CD4-positive, alpha-beta memory T cell (primary cell): ENCODE measurements at regions of chr1 and their contacts with region 1.

Region 1: GRCh38 chr1:77978969-77979876 is at the start of gene FUBP1:
- DNase-seq: peak; percentile 95 to 98 (median 97)
- H3K4me3 ChIP-seq: peak within 1 kb of the TSS; percentile 74 to 94
- H3K4me3 Mint-ChIP-seq: no peak within 1 kb of the TSS
- H3K27ac ChIP-seq: peak within 1 kb of the TSS; percentile 100
- H3K27ac Mint-ChIP-seq: no peak within 1 kb of the TSS
- H3K4me1 ChIP-seq: peaks cover 55% of the 10 kb centered on the region
- H3K4me1 Mint-ChIP-seq: peaks cover 22 to 39% (median 30%) of the 10 kb centered on the region in 4 donors
- H3K27me3 ChIP-seq: no peaks in the 10 kb centered on the region
- H3K27me3 Mint-ChIP-seq: no peaks in the 10 kb centered on the region
- total RNA-seq, gene FUBP1: 246 to 270 TPM

Region 2: GRCh38 chr1:77779529-77780281 is 199.5 kb before region 1 on chr1 and contains the start of gene MIGA1:
- CTCF ChIA-PET with region 1: no interaction called
- POLR2A ChIA-PET with region 1: interaction called, 26 read pairs
- intact Hi-C with region 1: no loop called
- DNase-seq: peak; percentile 86 to 93 (median 87)
- H3K4me3 ChIP-seq: peak within 1 kb of the TSS; percentile 83 to 96
- H3K4me3 Mint-ChIP-seq: peak within 1 kb of the TSS; percentile 85 to 96 (median 94)
- H3K27ac ChIP-seq: peak within 1 kb of the TSS; percentile 68
- H3K27ac Mint-ChIP-seq: peak within 1 kb of the TSS; percentile 91 to 96 (median 93)
- H3K4me1 ChIP-seq: peaks cover 36% of the 10 kb centered on the region
- H3K4me1 Mint-ChIP-seq: peaks cover 28 to 42% (median 34%) of the 10 kb centered on the region in 4 donors
- H3K27me3 ChIP-seq: no peaks in the 10 kb centered on the region
- H3K27me3 Mint-ChIP-seq: no peaks in the 10 kb centered on the region
- total RNA-seq, gene MIGA1: 21.7 TPM

Region 3: GRCh38 chr1:77991638-77992037 is 12.4 kb after region 1 on chr1:
- CTCF ChIA-PET with region 1: interaction called, 10 read pairs
- POLR2A ChIA-PET with region 1: interaction called, 3 read pairs
- intact Hi-C with region 1: no loop called
- DNase-seq: no peak
- H3K4me3 ChIP-seq: no peak overlapping the region
- H3K4me3 Mint-ChIP-seq: no peak overlapping the region
- H3K27ac ChIP-seq: no peak overlapping the region
- H3K27ac Mint-ChIP-seq: no peak overlapping the region
- H3K4me1 ChIP-seq: no peaks in the 10 kb centered on the region
- H3K4me1 Mint-ChIP-seq: peaks cover 7 to 16% (median 14%) of the 10 kb centered on the region in 4 donors
- H3K27me3 ChIP-seq: no peaks in the 10 kb centered on the region
- H3K27me3 Mint-ChIP-seq: no peaks in the 10 kb centered on the region

Region 4: DNA sequence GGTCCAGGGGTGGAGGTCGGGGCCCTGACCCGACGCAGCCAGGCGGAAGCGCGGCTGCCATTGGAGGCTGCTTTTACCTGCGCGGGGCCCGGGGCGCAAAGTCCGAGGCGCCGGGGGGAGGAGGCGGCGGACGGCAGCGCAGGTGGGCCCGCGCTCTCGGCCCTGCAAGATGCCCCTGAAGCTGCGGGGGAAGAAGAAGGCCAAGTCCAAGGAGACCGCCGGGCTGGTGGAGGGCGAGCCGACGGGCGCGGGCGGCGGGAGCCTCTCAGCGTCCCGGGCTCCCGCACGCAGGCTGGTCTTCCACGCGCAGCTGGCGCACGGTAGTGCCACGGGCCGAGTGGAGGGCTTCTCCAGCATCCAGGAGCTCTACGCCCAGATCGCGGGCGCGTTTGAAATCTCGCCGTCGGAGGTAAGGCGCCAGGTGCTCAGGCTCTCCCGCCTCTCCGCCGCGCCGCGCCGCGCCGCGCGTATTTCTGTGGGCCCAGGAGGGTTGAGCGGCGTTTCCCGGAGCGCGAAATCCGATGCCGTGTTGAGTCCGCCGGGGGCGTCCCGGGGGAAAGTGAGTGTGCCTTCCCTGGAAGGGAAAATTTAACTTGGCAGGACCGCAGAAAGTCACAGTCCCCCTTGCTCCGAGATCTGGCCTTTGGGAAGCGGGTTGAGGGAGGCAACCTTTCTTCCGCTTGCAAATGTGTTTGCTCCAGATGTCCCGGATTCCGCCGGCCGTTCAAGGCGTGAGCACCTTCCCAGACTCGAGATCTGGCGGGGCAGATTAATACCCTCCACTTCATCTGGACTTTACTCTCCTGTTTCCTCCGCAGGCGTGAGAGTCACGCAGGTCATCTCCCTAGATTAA is 66.9 kb after region 1 on chr1 and contains the start of gene GIPC2:
- CTCF ChIA-PET with region 1: interaction called, 3 read pairs
- POLR2A ChIA-PET with region 1: interaction called, 4 read pairs
- intact Hi-C with region 1: loop called (anchors 2 kb)
- DNase-seq: peak in 4 of 5 donors; percentile 10 to 21 (median 13)
- H3K4me3 ChIP-seq: peak within 1 kb of the TSS in 1 of 2 donors; percentile 28
- H3K4me3 Mint-ChIP-seq: peak within 1 kb of the TSS; percentile 76 to 84 (median 82)
- H3K27ac ChIP-seq: no peak within 1 kb of the TSS
- H3K27ac Mint-ChIP-seq: peak within 1 kb of the TSS in 2 of 7 donors; percentile 27 to 29
- H3K4me1 ChIP-seq: peaks cover 11% of the 10 kb centered on the region
- H3K4me1 Mint-ChIP-seq: peaks cover 5 to 27% (median 18%) of the 10 kb centered on the region in 4 donors
- H3K27me3 ChIP-seq: peaks cover 14% of the 10 kb centered on the region
- H3K27me3 Mint-ChIP-seq: peaks cover 34 to 43% of the 10 kb centered on the region in 2 donors
- total RNA-seq, gene GIPC2: 0.28 to 0.52 TPM